HCT116 (cell line): ENCODE measurements at regions of chr1 and their contacts with region 1.

Region 1: GRCh38 chr1:100351095-100351891 is 1.0 kb upstream of the CDC14A start:
- DNase-seq: peak; percentile 86
- ATAC-seq: peak; percentile 74
- H3K4me3 ChIP-seq: peak overlapping the region; percentile 72 to 89
- H3K27ac ChIP-seq: peak overlapping the region; percentile 84
- H3K4me1 ChIP-seq: peaks cover 27 to 49% of the 10 kb centered on the region in 2 experiments
- H3K27me3 ChIP-seq: no peaks in the 10 kb centered on the region
- CTCF ChIP-seq: peak in 2 of 3 experiments; percentile 18 to 29; a peak in 2 of 6 replicates
- POLR2A ChIP-seq: peak; percentile 64
- RAD21 ChIP-seq: peak; percentile 35; the same call in 1 of the 2 replicates

Region 2: GRCh38 chr1:99969729-99970621 is 381.3 kb before region 1 on chr1 and contains the start of gene SLC35A3:
- CTCF ChIA-PET with region 1: no interaction called
- POLR2A ChIA-PET with region 1: no interaction called
- RAD21 ChIA-PET with region 1: no interaction called
- intact Hi-C with region 1: loop called (anchors 10 kb)
- DNase-seq: peak; percentile 62
- ATAC-seq: peak; percentile 91
- H3K4me3 ChIP-seq: peak within 1 kb of the TSS; percentile 59 to 65
- H3K27ac ChIP-seq: peak within 1 kb of the TSS; percentile 74
- H3K4me1 ChIP-seq: peaks cover 10 to 28% of the 10 kb centered on the region in 2 experiments
- H3K27me3 ChIP-seq: no peaks in the 10 kb centered on the region
- CTCF ChIP-seq: no peak
- POLR2A ChIP-seq: peak; percentile 78
- RAD21 ChIP-seq: 0 out of 2 replicates have a peak, but pooled peaks have one; percentile 10
- total RNA-seq, gene SLC35A3: 21.6 TPM

Region 3: GRCh38 chr1:100132566-100133477 is 218.5 kb before region 1 on chr1 and contains the starts of genes SASS6 and TRMT13:
- CTCF ChIA-PET with region 1: no interaction called
- POLR2A ChIA-PET with region 1: no interaction called
- RAD21 ChIA-PET with region 1: no interaction called
- intact Hi-C with region 1: loop called (anchors 2 kb)
- DNase-seq: peak; percentile 97
- ATAC-seq: peak; percentile 92
- H3K4me3 ChIP-seq: peak within 1 kb of the TSS; percentile 76 to 78
- H3K27ac ChIP-seq: peak within 1 kb of the TSS; percentile 62
- H3K4me1 ChIP-seq: peaks cover 14 to 18% of the 10 kb centered on the region in 2 experiments
- H3K27me3 ChIP-seq: no peaks in the 10 kb centered on the region
- CTCF ChIP-seq: no peak
- POLR2A ChIP-seq: peak; percentile 67
- RAD21 ChIP-seq: no peak
- total RNA-seq, gene SASS6: 13.7 TPM
- total RNA-seq, gene TRMT13: 13.2 TPM

Region 4: GRCh38 chr1:100249537-100250257 is 101.6 kb before region 1 on chr1 and contains the start of gene DBT:
- CTCF ChIA-PET with region 1: no interaction called
- POLR2A ChIA-PET with region 1: interaction called, 3 read pairs
- RAD21 ChIA-PET with region 1: no interaction called
- intact Hi-C with region 1: loop called (anchors 5 kb)
- DNase-seq: peak; percentile 84
- ATAC-seq: peak; percentile 100
- H3K4me3 ChIP-seq: peak within 1 kb of the TSS; percentile 88 to 92
- H3K27ac ChIP-seq: peak within 1 kb of the TSS; percentile 59
- H3K4me1 ChIP-seq: peaks cover 6 to 17% of the 10 kb centered on the region in 2 experiments; a peak in 3 of 4 replicates
- H3K27me3 ChIP-seq: no peaks in the 10 kb centered on the region
- CTCF ChIP-seq: no peak
- POLR2A ChIP-seq: peak; percentile 85
- RAD21 ChIP-seq: no peak
- total RNA-seq, gene DBT: 14.0 TPM

Region 5: GRCh38 chr1:100265931-100266740 is 85.2 kb before region 1 on chr1 and contains the start of gene RTCA:
- CTCF ChIA-PET with region 1: no interaction called
- POLR2A ChIA-PET with region 1: interaction called, 4 read pairs
- RAD21 ChIA-PET with region 1: no interaction called
- intact Hi-C with region 1: loop called (anchors 1 kb)
- DNase-seq: peak; percentile 87
- ATAC-seq: peak; percentile 96
- H3K4me3 ChIP-seq: peak within 1 kb of the TSS; percentile 94 to 99
- H3K27ac ChIP-seq: peak within 1 kb of the TSS; percentile 87
- H3K4me1 ChIP-seq: peaks cover 0 to 15% of the 10 kb centered on the region in 2 experiments; a peak in 2 of 4 replicates
- H3K27me3 ChIP-seq: no peaks in the 10 kb centered on the region
- CTCF ChIP-seq: no peak
- POLR2A ChIP-seq: peak; percentile 86
- RAD21 ChIP-seq: no peak
- total RNA-seq, gene RTCA: 26.5 TPM

Region 6: GRCh38 chr1:100710906-100711682 is 359.8 kb after region 1 on chr1:
- CTCF ChIA-PET with region 1: no interaction called
- POLR2A ChIA-PET with region 1: no interaction called
- RAD21 ChIA-PET with region 1: no interaction called
- intact Hi-C with region 1: no loop called
- DNase-seq: no peak
- ATAC-seq: no peak
- H3K4me3 ChIP-seq: no peak overlapping the region
- H3K27ac ChIP-seq: no peak overlapping the region
- H3K4me1 ChIP-seq: peaks cover 0 to 7% of the 10 kb centered on the region in 2 experiments; a peak in 2 of 4 replicates
- H3K27me3 ChIP-seq: no peaks in the 10 kb centered on the region
- CTCF ChIP-seq: no peak
- POLR2A ChIP-seq: no peak
- RAD21 ChIP-seq: no peak